ENCODE measurements at regions of chr6 and their contacts with region 1.

Region 1: DNA sequence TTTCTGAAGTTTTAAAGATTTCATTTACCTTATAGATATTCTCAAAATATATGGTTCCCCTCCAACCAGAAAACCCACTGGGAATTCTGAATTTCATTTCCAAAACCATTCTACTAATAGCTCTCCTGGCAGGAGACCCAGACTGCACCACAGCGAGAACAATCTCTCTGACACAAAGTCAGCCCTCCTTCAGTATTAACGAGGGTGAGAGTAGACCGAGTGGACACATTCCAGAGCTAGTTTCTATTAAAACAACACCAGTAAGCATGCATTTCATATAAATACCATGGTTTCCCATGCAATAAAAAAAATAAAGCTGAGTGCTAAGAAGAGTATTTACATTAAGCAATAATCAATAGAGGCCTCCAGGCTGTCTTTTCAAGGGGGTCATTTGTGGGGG is 899.6 kb upstream of the SLC35B3 start:
- DNase-seq: no peak
- ATAC-seq: no peak
- H3K4me3 ChIP-seq: no peak overlapping the region
- H3K27ac ChIP-seq: no peak overlapping the region
- H3K4me1 ChIP-seq: no peaks in the 10 kb centered on the region
- CTCF ChIP-seq: no peak
- EP300 ChIP-seq: no peak
- POLR2A ChIP-seq: no peak
- RAD21 ChIP-seq: no peak

Region 2: GRCh38 chr6:9554806-9555205 is 219.8 kb after region 1 on chr6:
- CTCF ChIA-PET with region 1: no interaction called
- POLR2A ChIA-PET with region 1: interaction called, 10 read pairs
- DNase-seq: no peak
- ATAC-seq: no peak
- H3K4me3 ChIP-seq: no peak overlapping the region
- H3K27ac ChIP-seq: no peak overlapping the region
- H3K4me1 ChIP-seq: no peaks in the 10 kb centered on the region
- CTCF ChIP-seq: no peak
- EP300 ChIP-seq: no peak
- POLR2A ChIP-seq: no peak
- RAD21 ChIP-seq: no peak